Naive thymus-derived CD4-positive, alpha-beta T cell (primary cell): ENCODE measurements at regions of chr9 and their contacts with region 1.

Region 1: GRCh38 chr9:88534456-88535261 is at the start of gene NXNL2:
- DNase-seq: peak in 8 of 9 donors; percentile 21 to 59 (median 48)
- ATAC-seq: peak; percentile 80
- H3K4me3 ChIP-seq: peak within 1 kb of the TSS; percentile 54
- H3K4me3 Mint-ChIP-seq: peak within 1 kb of the TSS; percentile 53 to 88 (median 72)
- H3K27ac ChIP-seq: no peak within 1 kb of the TSS
- H3K27ac Mint-ChIP-seq: peak within 1 kb of the TSS in 2 of 9 donors; percentile 55 to 62
- H3K4me1 ChIP-seq: peaks cover 0 to 12% of the 10 kb centered on the region in 2 donors
- H3K4me1 Mint-ChIP-seq: peaks cover 9 to 32% (median 20%) of the 10 kb centered on the region in 7 donors
- H3K27me3 ChIP-seq: no peaks in the 10 kb centered on the region
- H3K27me3 Mint-ChIP-seq: peaks cover 0 to 81% (median 24%) of the 10 kb centered on the region in 5 donors
- total RNA-seq, gene NXNL2: not detected

Region 2: DNA sequence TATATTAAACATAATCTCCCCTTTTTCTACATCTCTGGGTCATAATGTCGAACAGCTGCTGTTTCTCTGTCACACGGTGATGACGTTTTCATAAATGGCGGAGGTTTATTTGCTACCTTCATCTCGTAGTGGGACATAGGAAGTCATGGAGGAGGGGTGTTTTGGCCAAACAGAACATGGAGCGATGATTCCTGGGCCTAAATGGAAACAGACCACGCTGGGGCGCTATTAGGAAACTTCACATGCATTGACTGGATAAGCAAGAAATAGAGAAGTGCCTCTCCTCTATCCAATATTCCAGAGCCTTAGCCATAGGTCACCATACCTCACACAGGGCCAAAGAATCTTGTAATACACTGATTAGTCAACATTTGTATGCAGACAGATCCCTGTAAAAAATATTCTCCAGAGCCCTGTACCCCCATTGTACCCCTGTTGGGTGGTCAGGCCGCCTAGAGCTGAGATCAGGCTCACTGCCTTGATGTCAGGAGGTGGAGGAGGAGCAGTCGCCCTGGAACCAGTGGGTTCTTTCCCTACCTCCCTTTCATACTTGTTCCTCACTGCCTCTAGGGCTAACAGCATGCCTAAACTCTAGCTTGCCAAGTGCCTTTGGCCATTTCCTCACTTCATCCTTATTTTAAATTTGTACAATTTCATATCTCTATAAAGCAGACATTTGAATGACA is 224.2 kb before region 1 on chr9:
- CTCF ChIA-PET with region 1: interaction called, 3 read pairs
- POLR2A ChIA-PET with region 1: no interaction called
- intact Hi-C with region 1: loop called in 1 of 2 experiments (anchors 10 kb)
- DNase-seq: no peak
- ATAC-seq: peak; percentile 29
- H3K4me3 ChIP-seq: no peak overlapping the region
- H3K4me3 Mint-ChIP-seq: no peak overlapping the region
- H3K27ac ChIP-seq: no peak overlapping the region
- H3K27ac Mint-ChIP-seq: peak overlapping the region in 1 of 9 donors; percentile 15
- H3K4me1 ChIP-seq: peaks cover 3 to 17% of the 10 kb centered on the region in 2 donors
- H3K4me1 Mint-ChIP-seq: peaks cover 13 to 57% (median 23%) of the 10 kb centered on the region in 7 donors
- H3K27me3 ChIP-seq: no peaks in the 10 kb centered on the region
- H3K27me3 Mint-ChIP-seq: no peaks in the 10 kb centered on the region

Region 3: GRCh38 chr9:88477300-88477751 is 57.3 kb before region 1 on chr9:
- CTCF ChIA-PET with region 1: no interaction called
- POLR2A ChIA-PET with region 1: no interaction called
- intact Hi-C with region 1: no loop called
- DNase-seq: no peak
- ATAC-seq: no peak
- H3K4me3 ChIP-seq: no peak overlapping the region
- H3K4me3 Mint-ChIP-seq: peak overlapping the region in 1 of 10 donors; percentile 20
- H3K27ac ChIP-seq: no peak overlapping the region
- H3K27ac Mint-ChIP-seq: peak overlapping the region in 1 of 9 donors; percentile 7
- H3K4me1 ChIP-seq: no peaks in the 10 kb centered on the region
- H3K4me1 Mint-ChIP-seq: peaks cover 0 to 20% (median 0%) of the 10 kb centered on the region in 7 donors
- H3K27me3 ChIP-seq: no peaks in the 10 kb centered on the region
- H3K27me3 Mint-ChIP-seq: no peaks in the 10 kb centered on the region